AG04450 (cell line): ENCODE measurements at regions of chr14 and their contacts with region 1.

Region 1: DNA sequence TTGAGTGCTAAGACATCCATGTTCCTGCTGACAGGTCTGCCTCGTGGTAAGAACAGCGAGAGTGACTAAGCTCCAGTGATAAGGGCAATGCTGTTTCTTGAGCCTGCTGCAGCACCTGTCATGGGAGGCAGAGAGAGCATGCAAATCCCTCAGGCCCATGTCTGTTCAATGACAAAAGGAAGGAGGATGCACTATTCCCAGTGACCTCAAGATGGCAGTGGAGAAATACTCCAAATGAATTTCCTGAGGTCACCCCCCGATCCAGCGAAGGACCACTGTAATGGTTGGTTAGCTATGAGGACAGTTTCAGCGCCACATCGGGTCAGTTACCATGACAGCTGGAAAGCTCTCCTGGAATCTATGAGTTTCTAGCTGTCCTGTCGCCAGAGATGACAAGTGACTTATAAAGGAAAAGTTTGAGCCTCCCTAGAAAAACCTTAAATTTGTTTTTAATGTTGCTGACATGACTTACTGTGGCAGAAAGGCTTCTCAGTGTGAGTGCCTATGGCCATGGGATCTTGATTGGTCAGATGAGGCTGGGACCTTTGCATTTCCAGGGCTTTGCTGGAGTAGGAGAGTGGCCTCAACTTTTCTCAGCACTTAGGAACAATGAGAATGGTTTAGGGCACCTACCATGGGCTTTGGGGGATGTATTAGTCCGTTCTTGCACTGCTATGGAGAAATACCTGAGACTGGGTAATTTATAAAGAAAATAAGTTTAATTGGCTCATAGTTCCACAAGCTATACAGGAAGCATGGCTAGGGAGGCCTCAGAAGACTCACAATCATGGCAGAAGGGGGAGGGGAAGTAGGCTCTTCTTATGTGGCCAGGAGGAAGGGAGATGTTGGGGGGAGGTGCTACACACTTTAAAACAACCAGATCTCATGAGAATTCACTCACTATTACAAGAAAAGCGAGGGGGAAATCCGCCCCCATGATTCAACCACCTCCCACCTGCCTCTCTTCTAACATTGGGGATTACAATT is 88.0 kb upstream of the TMEM260 start:
- DNase-seq: peak; percentile 16
- H3K4me3 ChIP-seq: no peak overlapping the region; the same call in 1 of the 2 replicates
- H3K27ac ChIP-seq: no peak overlapping the region
- H3K27me3 ChIP-seq: no peaks in the 10 kb centered on the region
- CTCF ChIP-seq: peak; percentile 86

Region 2: DNA sequence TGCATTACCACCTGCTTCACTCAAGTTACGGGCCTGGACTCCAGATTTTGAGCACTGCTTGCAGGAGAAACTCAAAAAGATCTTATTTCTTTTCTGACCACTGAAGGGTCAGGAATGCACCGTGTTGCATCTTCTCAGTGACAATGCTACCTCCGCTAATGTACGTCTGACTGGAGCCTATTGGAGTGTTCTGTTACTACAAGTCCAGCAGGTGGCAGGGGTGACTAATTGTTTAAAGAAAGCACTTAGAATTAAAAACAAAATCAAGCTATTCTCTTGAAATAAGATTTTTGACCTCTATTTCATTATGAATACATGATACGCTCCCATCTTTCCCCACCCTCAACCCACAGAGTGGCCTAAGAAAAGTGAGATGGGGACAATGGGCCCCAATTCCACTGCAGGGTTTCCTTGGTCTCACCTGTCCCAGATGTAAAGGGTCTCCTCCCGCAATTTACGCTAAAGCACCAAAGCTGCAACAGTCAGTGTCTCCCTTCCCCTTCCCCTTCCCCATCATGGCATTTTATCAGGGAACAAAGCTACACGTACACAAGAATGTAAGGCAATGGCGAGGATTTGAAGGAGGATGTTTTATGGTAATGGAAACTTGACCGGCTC is 1053.4 kb before region 1 on chr14:
- CTCF ChIA-PET with region 1: interaction called, 17 read pairs
- POLR2A ChIA-PET with region 1: no interaction called
- DNase-seq: peak; percentile 27
- H3K4me3 ChIP-seq: no peak overlapping the region
- H3K27ac ChIP-seq: no peak overlapping the region
- H3K27me3 ChIP-seq: peaks cover 12% of the 10 kb centered on the region
- CTCF ChIP-seq: peak; percentile 64

Region 3: GRCh38 chr14:55731881-55732498 is 759.6 kb before region 1 on chr14:
- CTCF ChIA-PET with region 1: interaction called, 24 read pairs
- POLR2A ChIA-PET with region 1: no interaction called
- DNase-seq: no peak
- H3K4me3 ChIP-seq: no peak overlapping the region
- H3K27ac ChIP-seq: no peak overlapping the region
- H3K27me3 ChIP-seq: no peaks in the 10 kb centered on the region
- CTCF ChIP-seq: peak; percentile 66

Region 4: GRCh38 chr14:56351861-56352260 is 139.7 kb before region 1 on chr14:
- CTCF ChIA-PET with region 1: no interaction called
- POLR2A ChIA-PET with region 1: no interaction called
- DNase-seq: peak; percentile 61
- H3K4me3 ChIP-seq: no peak overlapping the region
- H3K27ac ChIP-seq: no peak overlapping the region
- H3K27me3 ChIP-seq: no peaks in the 10 kb centered on the region
- CTCF ChIP-seq: no peak

Region 5: DNA sequence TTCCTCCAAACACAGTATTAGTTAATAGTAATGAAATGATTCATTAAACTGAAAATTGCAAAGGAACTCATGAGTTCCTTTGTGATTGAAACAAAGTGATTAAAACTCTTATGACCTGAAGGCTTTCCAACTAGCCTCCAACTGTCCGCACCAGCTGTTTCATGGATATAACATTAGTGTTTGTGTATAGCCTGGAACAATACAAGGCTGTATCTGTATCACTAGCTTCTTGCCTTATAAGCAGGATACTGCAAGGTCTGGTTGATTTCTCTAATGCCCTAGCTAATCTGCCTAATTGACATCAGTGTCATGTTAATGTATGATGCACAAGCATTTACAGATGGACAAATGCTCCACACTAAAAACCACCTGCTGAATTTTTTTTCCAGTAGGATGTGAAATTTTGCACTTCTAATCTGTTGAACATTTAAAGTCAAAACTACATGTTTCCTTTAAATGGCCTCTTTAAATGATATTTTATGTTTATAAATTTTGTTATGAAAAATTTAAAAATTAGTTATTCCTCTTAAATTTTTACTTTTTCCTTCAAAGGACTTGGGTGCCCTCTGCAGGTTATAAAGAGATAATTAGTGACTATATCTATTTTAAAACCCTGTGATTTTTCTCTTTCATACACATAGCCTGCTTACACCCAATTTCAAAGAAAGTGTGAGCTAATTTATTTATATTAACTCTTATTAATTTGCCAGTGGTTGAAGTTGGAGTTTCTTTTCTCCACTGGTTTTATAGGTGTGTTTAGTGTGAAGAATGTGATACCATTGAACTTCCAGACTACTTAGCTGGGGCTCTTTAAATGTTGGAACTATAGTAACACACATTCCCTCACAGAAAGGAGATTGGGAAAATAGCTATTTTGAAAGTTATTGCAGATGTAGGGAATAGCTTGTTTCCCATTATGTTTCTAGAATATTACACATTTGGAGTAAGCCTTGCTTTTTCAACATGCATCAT is 802.6 kb after region 1 on chr14:
- CTCF ChIA-PET with region 1: interaction called, 34 read pairs
- POLR2A ChIA-PET with region 1: no interaction called
- DNase-seq: no peak
- H3K4me3 ChIP-seq: no peak overlapping the region
- H3K27ac ChIP-seq: no peak overlapping the region
- H3K27me3 ChIP-seq: no peaks in the 10 kb centered on the region
- CTCF ChIP-seq: peak; percentile 50